ENCODE measurements at regions of chr11 and their contacts with region 1.

Region 1: GRCh38 chr11:47060807-47061206 is 115.9 kb downstream of the ARFGAP2 start:
- DNase-seq: no peak
- ATAC-seq: peak; percentile 44
- H3K4me3 Mint-ChIP-seq: no peak overlapping the region
- H3K27ac Mint-ChIP-seq: no peak overlapping the region
- H3K4me1 Mint-ChIP-seq: peaks cover 6% of the 10 kb centered on the region
- H3K27me3 Mint-ChIP-seq: no peaks in the 10 kb centered on the region

Region 2: DNA sequence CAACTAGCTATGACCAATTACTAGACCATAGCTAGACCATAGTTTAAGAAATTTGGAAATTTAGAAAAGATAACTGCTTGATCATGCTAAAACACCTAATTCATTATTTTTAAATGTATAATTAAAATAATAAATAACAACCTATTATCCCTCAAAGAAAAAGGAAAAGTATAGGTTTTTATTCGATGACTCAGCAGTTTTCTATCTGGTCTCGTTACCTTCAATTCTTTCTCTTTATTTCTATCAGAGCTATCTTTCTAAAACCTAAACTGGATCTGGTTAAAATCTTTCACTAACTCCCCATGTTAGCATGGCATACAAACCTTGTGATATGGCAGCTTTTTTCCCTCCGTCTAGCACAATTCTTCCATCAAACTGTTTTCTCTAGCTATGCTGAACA is 97.0 kb before region 1 on chr11:
- CTCF ChIA-PET with region 1: interaction called, 3 read pairs
- POLR2A ChIA-PET with region 1: interaction called, 12 read pairs
- intact Hi-C with region 1: no loop called
- DNase-seq: no peak
- ATAC-seq: no peak
- H3K4me3 Mint-ChIP-seq: no peak overlapping the region
- H3K27ac Mint-ChIP-seq: no peak overlapping the region
- H3K4me1 Mint-ChIP-seq: no peaks in the 10 kb centered on the region
- H3K27me3 Mint-ChIP-seq: no peaks in the 10 kb centered on the region

Measured in activated CD4-positive, alpha-beta T cell treated with anti-CD3 and anti-CD28 coated beads for 36 hours (primary cell).